KBM-7 (cell line): ENCODE measurements at regions of chr5 and their contacts with region 1.

Region 1: GRCh38 chr5:180873615-180874520 is 12.8 kb upstream of the ZFP62 start:
- DNase-seq: peak; percentile 67

Region 2: DNA sequence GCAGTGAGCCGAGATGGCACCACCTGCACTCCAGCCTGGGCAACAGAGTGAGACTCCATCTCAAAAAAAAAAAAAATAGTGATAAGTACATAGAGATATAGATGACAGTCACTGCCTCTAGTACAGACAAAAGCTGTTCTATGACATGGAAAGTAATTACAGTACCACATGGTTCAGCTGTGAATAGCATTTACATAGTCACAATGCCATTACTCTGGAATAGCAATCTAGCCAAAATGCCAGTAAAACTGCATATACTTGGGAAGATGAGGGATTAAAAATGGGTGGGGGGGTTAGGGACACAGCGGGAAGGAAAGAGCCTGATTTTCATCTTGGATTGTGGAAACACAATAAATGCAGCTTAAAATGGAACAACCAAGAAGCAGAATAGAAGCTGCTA is 419.1 kb before region 1 on chr5:
- in situ Hi-C with region 1: no loop called
- DNase-seq: no peak

Region 3: GRCh38 chr5:180540050-180540694 is 333.7 kb before region 1 on chr5:
- in situ Hi-C with region 1: no loop called
- DNase-seq: no peak

Region 4: DNA sequence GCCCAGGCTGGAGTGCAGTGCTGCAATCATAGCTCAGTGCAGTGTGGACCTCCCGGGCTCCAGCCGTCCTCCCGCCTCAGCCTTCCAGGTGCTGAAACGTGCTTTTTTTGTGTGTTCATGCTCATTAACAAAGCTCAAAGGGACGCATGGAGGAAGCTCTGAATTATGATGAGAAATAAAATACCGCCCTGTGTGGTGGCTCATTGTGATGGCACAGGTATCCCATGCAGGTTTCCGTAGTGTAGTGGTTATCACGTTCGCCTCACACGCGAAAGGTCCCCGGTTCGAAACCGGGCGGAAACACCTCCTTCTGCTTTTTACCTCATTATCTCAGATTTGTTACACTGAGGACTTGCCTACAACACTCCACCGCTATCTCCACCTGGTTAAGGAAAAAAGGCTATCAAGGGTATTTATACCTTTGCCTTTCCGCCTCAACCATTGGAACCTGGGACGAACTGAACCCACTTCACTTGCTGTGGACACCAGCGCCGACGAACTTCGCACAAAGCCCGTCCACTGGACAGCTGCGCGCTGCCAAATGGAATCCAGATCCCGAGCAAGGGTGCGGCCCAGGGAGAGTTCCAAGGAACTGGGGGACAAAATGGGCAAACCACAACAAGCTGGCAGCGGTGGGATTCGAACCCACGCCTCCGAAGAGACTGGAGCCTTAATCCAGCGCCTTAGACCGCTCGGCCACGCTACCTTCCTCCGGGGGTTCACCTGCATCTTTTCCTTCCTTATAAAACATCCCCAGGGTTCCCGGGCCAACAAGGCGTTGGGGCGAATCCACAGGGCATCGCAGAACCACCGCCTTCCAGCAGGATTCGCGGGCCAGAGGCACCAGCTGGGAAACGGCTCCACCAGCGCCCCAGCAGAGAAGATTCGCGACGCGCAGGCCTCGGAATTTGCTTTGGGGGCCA is 299.8 kb after region 1 on chr5:
- in situ Hi-C with region 1: loop called (anchors 5 kb)
- DNase-seq: peak; percentile 88